B cell (primary cell): ENCODE measurements at regions of chr5 and their contacts with region 1.

Region 1: DNA sequence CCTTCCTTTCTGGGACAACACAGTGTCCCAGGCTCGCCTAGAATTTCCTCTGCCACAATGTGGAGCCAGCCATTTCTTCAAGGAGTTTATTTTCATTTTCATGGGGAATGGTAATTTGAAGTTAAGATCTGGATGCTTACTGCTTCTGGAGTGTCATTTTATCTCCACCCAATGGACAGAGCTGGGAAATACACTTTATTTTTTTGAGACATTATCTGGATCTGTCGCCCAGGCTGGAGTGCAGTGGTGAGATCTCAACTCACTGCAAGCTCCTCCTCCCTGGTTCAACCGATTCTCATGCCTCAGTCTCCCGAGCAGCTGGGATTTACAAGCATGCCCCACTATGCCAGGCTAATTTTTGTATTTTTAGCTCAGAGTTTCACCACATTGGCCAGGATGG is 12.7 kb upstream of the THG1L start:
- DNase-seq: peak; percentile 74
- ATAC-seq: peak; percentile 95
- H3K4me3 ChIP-seq: no peak overlapping the region
- H3K4me3 Mint-ChIP-seq: peak overlapping the region; percentile 18
- H3K27ac ChIP-seq: peak overlapping the region in 1 of 2 donors; percentile 30
- H3K27ac Mint-ChIP-seq: peak overlapping the region; percentile 42
- H3K4me1 ChIP-seq: peaks cover 19 to 20% of the 10 kb centered on the region in 2 donors
- H3K4me1 Mint-ChIP-seq: peaks cover 15% of the 10 kb centered on the region
- H3K27me3 ChIP-seq: no peaks in the 10 kb centered on the region
- H3K27me3 Mint-ChIP-seq: no peaks in the 10 kb centered on the region
- CTCF ChIP-seq: peak; percentile 80

Region 2: GRCh38 chr5:157328277-157328912 is 390.1 kb before region 1 on chr5:
- CTCF ChIA-PET with region 1: interaction called, 27 read pairs
- POLR2A ChIA-PET with region 1: no interaction called
- intact Hi-C with region 1: loop called (anchors 1 kb)
- DNase-seq: peak; percentile 78
- ATAC-seq: peak; percentile 98
- H3K4me3 ChIP-seq: no peak overlapping the region
- H3K4me3 Mint-ChIP-seq: no peak overlapping the region
- H3K27ac ChIP-seq: no peak overlapping the region
- H3K27ac Mint-ChIP-seq: no peak overlapping the region
- H3K4me1 ChIP-seq: no peaks in the 10 kb centered on the region
- H3K4me1 Mint-ChIP-seq: peaks cover 6% of the 10 kb centered on the region
- H3K27me3 ChIP-seq: no peaks in the 10 kb centered on the region
- H3K27me3 Mint-ChIP-seq: no peaks in the 10 kb centered on the region
- CTCF ChIP-seq: peak; percentile 96

Region 3: DNA sequence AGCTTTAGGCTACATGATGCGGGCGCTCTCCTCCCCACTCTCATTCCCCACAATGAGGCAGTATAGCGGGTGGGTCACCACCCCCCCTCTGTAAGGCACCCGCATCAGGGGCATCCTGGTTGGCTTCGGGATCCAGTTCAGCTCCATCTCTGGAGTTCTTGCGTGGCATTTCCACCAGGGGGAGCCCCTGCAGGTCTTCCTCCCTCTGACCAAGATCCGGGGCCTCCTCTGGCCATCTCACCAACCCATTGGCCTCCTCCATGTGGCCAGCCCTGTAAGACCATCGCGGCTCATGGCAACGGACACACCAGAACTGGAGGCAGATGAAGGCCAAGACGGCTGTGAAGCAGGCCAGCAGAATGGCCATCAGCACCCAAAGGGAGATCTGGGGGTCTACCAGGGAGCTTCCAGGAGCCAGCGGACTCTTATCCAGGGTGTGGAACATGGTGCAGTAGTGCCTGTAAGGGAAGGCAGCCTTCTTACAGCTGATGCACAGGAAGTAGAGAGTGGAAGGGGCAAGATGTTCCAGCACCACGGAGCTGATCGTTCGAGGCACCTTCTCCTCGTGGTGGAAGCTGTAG is 375.6 kb before region 1 on chr5:
- CTCF ChIA-PET with region 1: interaction called, 24 read pairs
- POLR2A ChIA-PET with region 1: no interaction called
- intact Hi-C with region 1: loop called (anchors 5 kb)
- DNase-seq: peak; percentile 52
- ATAC-seq: peak; percentile 49
- H3K4me3 ChIP-seq: no peak overlapping the region
- H3K4me3 Mint-ChIP-seq: no peak overlapping the region
- H3K27ac ChIP-seq: no peak overlapping the region
- H3K27ac Mint-ChIP-seq: no peak overlapping the region
- H3K4me1 ChIP-seq: no peaks in the 10 kb centered on the region
- H3K4me1 Mint-ChIP-seq: no peaks in the 10 kb centered on the region
- H3K27me3 ChIP-seq: no peaks in the 10 kb centered on the region
- H3K27me3 Mint-ChIP-seq: no peaks in the 10 kb centered on the region
- CTCF ChIP-seq: peak; percentile 70

Region 4: DNA sequence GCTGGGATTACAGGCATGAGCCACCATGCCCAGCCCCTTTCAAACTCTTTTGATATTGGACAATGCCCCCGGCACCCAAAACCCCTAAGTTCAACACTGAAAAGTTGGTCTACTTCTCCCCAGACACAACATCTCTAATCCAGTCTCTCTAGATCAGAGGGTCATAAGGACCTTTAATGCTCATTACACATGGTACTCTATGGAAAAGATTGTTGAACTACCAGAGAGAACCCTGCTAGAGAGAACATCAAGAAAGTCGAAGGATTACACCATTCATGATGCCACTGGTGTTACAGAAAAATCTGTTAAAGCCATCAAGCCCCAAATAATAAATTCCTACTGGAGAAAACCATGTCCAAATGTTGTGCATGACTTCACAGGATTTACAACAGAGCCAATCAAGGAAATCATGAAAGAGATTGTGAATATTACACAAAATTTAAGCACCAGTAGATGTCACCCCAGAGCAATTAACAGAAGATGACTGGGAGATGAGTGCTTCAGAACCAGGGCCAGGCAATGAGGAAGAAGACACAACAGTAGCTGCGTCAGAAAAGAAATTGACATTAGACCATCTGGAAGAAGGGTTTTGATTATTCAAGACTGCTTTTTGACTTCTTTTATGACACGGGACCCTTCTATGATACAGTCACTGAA is 286.8 kb before region 1 on chr5:
- CTCF ChIA-PET with region 1: interaction called, 119 read pairs
- POLR2A ChIA-PET with region 1: no interaction called
- intact Hi-C with region 1: loop called (anchors 1 kb)
- DNase-seq: peak; percentile 84
- ATAC-seq: peak; percentile 100
- H3K4me3 ChIP-seq: peak overlapping the region in 1 of 5 experiments; percentile 30
- H3K4me3 Mint-ChIP-seq: peak overlapping the region; percentile 40
- H3K27ac ChIP-seq: peak overlapping the region; percentile 28 to 67
- H3K27ac Mint-ChIP-seq: peak overlapping the region; percentile 88
- H3K4me1 ChIP-seq: peaks cover 8 to 11% of the 10 kb centered on the region in 2 donors
- H3K4me1 Mint-ChIP-seq: peaks cover 18% of the 10 kb centered on the region
- H3K27me3 ChIP-seq: no peaks in the 10 kb centered on the region
- H3K27me3 Mint-ChIP-seq: no peaks in the 10 kb centered on the region
- CTCF ChIP-seq: peak; percentile 76

Region 5: DNA sequence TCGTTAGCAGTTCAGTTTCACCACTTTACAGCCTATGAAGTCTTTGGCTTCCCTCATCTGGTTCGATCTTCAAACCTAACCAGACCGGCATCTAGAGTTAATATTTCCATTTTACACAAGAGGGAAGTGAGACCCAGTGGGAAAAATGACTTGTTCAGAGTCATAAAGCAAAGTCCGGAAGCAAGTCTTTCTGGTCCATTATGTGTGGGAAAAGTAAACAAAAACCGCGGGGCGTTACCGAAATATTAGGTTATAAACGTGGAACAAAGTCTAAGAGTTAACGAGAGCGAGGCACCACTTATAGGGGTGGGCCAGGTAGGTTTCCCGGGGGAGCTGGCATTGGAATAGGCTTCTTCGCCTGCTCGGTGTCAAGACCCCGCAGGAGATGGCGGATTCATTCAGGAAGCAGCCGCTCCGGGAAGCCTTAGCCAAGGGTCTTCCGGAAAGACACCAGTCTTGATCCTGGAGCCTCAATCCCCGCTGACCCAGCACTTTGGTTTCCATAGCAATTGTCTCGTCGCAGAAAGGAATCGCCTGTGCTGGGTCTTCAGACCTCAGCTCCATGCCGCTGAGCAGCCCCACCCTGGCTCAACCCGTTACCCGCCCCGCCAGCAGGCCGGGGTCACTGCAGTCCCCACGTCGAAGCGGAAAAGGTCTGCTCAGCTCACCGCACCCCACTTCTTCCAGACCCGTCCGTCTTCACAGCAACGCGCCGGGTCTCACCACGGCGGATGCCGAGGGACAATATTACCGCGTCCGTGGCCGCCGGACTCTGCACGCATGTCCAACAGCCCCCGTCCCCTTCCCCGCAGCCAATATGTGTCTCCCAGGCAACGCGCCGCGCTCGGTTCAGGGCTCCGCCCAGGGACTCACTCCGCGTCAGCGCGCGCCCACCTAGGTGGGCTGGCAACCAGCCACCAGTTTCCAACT is 47.6 kb before region 1 on chr5 and contains the start of gene C5orf52:
- CTCF ChIA-PET with region 1: interaction called, 28 read pairs
- POLR2A ChIA-PET with region 1: no interaction called
- intact Hi-C with region 1: loop called (anchors 1 kb)
- DNase-seq: peak; percentile 49
- ATAC-seq: peak; percentile 51
- H3K4me3 ChIP-seq: peak within 1 kb of the TSS; percentile 52 to 76 (median 72)
- H3K4me3 Mint-ChIP-seq: peak within 1 kb of the TSS; percentile 98
- H3K27ac ChIP-seq: peak within 1 kb of the TSS in 1 of 2 donors; percentile 17
- H3K27ac Mint-ChIP-seq: peak within 1 kb of the TSS; percentile 83
- H3K4me1 ChIP-seq: peaks cover 13 to 29% of the 10 kb centered on the region in 2 donors
- H3K4me1 Mint-ChIP-seq: peaks cover 29% of the 10 kb centered on the region
- H3K27me3 ChIP-seq: no peaks in the 10 kb centered on the region
- H3K27me3 Mint-ChIP-seq: no peaks in the 10 kb centered on the region
- CTCF ChIP-seq: no peak
- total RNA-seq, gene C5orf52: not detected in 2 replicates

Region 6: GRCh38 chr5:157731272-157732129 is 13.0 kb after region 1 on chr5 and contains the start of gene THG1L:
- CTCF ChIA-PET with region 1: interaction called, 18 read pairs
- POLR2A ChIA-PET with region 1: no interaction called
- intact Hi-C with region 1: loop called (anchors 1 kb)
- DNase-seq: peak; percentile 93
- ATAC-seq: peak; percentile 84
- H3K4me3 ChIP-seq: peak within 1 kb of the TSS; percentile 67 to 94 (median 93)
- H3K4me3 Mint-ChIP-seq: peak within 1 kb of the TSS; percentile 98
- H3K27ac ChIP-seq: peak within 1 kb of the TSS; percentile 92 to 94
- H3K27ac Mint-ChIP-seq: peak within 1 kb of the TSS; percentile 99
- H3K4me1 ChIP-seq: peaks cover 21 to 26% of the 10 kb centered on the region in 2 donors
- H3K4me1 Mint-ChIP-seq: peaks cover 30% of the 10 kb centered on the region
- H3K27me3 ChIP-seq: no peaks in the 10 kb centered on the region
- H3K27me3 Mint-ChIP-seq: no peaks in the 10 kb centered on the region
- CTCF ChIP-seq: no peak
- total RNA-seq, gene THG1L: 14.1 and 14.6 TPM in 2 replicates

Region 7: GRCh38 chr5:157799578-157799977 is 81.1 kb after region 1 on chr5:
- CTCF ChIA-PET with region 1: no interaction called
- POLR2A ChIA-PET with region 1: no interaction called
- intact Hi-C with region 1: no loop called
- DNase-seq: no peak
- ATAC-seq: no peak
- H3K4me3 ChIP-seq: no peak overlapping the region
- H3K4me3 Mint-ChIP-seq: no peak overlapping the region
- H3K27ac ChIP-seq: no peak overlapping the region
- H3K27ac Mint-ChIP-seq: no peak overlapping the region
- H3K4me1 ChIP-seq: no peaks in the 10 kb centered on the region
- H3K4me1 Mint-ChIP-seq: no peaks in the 10 kb centered on the region
- H3K27me3 ChIP-seq: no peaks in the 10 kb centered on the region
- H3K27me3 Mint-ChIP-seq: no peaks in the 10 kb centered on the region
- CTCF ChIP-seq: no peak

Region 8: DNA sequence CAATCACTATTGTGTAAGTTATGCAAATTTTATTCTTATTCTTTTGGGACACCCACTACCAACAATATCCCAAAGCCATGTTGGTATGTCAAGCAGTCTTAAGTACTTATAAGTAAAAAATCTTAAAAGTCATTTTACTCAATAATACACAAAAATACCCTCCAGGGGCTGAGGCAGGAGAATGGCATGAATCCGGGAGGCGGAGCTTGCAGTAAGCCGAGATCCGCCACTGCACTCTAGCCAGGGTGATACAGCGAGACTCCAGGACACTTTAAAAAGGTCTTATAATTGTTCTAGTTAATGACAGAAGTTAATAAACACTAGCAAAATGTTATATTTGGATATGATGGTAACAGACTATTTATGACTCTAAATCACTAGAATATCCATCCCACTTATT is 123.7 kb after region 1 on chr5:
- CTCF ChIA-PET with region 1: no interaction called
- POLR2A ChIA-PET with region 1: no interaction called
- intact Hi-C with region 1: no loop called
- DNase-seq: no peak
- ATAC-seq: no peak
- H3K4me3 ChIP-seq: no peak overlapping the region
- H3K4me3 Mint-ChIP-seq: no peak overlapping the region
- H3K27ac ChIP-seq: no peak overlapping the region
- H3K27ac Mint-ChIP-seq: no peak overlapping the region
- H3K4me1 ChIP-seq: no peaks in the 10 kb centered on the region
- H3K4me1 Mint-ChIP-seq: peaks cover 18% of the 10 kb centered on the region
- H3K27me3 ChIP-seq: no peaks in the 10 kb centered on the region
- H3K27me3 Mint-ChIP-seq: no peaks in the 10 kb centered on the region
- CTCF ChIP-seq: no peak